A673 (cell line): ENCODE measurements at regions of chr5 and their contacts with region 1.

Region 1: GRCh38 chr5:149803641-149804468 is 73.7 kb downstream of the PPARGC1B start:
- DNase-seq: no peak
- H3K4me3 ChIP-seq: no peak overlapping the region
- H3K27ac ChIP-seq: no peak overlapping the region
- H3K4me1 ChIP-seq: peaks cover 24% of the 10 kb centered on the region
- H3K27me3 ChIP-seq: no peaks in the 10 kb centered on the region
- CTCF ChIP-seq: no peak

Region 2: DNA sequence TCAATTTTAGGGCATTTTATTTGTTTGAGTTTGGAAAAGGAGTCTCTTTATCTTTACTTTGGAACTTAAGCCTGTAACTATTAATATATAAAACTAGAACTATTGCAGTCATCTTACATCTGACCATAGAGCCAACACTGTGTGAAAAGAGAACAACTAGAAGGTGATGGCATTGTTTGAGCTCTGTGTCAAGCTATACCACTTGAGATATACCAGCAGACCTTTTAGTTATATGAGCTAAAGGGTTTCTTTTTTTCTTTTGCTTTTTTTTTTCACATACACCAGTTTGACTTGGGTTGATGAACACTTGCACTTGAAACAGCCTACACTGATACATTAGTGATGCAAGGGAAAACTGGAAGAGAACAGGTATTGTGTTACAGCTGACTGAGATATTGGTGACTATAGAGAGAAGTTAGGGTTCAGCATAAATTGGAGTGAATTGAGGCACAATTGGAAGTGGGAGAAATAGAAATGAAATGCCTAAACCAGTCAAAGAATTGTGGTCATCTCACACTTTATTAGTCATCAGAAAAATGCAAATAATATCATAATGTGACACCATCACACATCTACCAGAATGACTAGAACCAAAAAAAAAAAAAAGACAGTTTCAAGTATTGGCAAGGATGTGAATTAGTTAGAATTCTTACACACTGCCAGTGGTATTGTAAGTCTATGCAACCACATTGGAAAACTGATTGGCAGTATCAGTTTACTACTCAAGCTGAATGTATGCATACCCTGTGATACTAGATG is 916.6 kb before region 1 on chr5:
- CTCF ChIA-PET with region 1: no interaction called
- POLR2A ChIA-PET with region 1: no interaction called
- intact Hi-C with region 1: no loop called
- DNase-seq: no peak
- H3K4me3 ChIP-seq: no peak overlapping the region
- H3K27ac ChIP-seq: no peak overlapping the region
- H3K4me1 ChIP-seq: no peaks in the 10 kb centered on the region
- H3K27me3 ChIP-seq: no peaks in the 10 kb centered on the region
- CTCF ChIP-seq: no peak

Region 3: GRCh38 chr5:149887622-149888183 is 83.8 kb after region 1 on chr5:
- CTCF ChIA-PET with region 1: no interaction called
- POLR2A ChIA-PET with region 1: no interaction called
- intact Hi-C with region 1: no loop called
- DNase-seq: peak; percentile 45
- H3K4me3 ChIP-seq: no peak overlapping the region
- H3K27ac ChIP-seq: no peak overlapping the region
- H3K4me1 ChIP-seq: peaks cover 8% of the 10 kb centered on the region
- H3K27me3 ChIP-seq: no peaks in the 10 kb centered on the region
- CTCF ChIP-seq: no peak

Region 4: DNA sequence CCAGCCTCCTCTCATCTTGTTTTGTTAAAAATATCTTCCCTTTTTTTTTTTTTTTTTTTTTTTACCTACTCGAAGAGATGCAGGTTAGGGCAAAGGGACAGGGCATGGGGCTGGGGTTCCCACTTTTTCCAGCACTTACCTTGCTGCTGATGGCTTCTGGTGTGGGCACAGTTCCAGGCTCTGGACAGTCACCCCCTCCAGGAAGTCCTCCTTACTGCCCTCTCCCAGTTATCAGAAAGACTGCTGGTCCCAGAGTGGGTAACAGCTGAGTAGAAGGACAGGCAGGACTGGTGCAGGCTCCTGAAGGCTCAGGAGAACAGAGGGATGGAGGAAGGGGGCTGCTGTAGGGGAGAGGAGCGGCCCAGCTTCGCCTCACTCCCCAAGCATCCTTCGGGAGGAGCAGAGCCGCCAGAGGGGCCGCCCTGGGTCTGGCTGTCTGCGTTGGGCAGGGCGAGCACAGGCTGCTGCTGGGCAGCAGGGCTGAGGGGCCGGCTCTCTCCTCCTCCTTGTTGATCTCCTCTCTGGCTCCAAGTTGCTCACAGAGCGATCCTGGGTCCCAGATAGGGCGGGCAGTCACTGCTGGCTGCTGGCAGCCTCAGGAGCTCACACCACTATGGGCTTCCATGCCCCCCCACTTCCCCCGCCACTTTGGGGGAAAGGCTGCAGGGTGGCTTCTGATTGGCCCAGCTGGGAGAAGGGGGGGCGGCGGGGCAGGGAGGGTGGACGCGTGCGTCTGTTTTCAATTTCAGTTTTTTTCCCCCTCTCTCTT is 351.6 kb after region 1 on chr5 and contains the start of gene PDGFRB:
- CTCF ChIA-PET with region 1: no interaction called
- POLR2A ChIA-PET with region 1: interaction called, 11 read pairs
- intact Hi-C with region 1: no loop called
- DNase-seq: peak; percentile 90
- H3K4me3 ChIP-seq: peak within 1 kb of the TSS; percentile 47
- H3K27ac ChIP-seq: peak within 1 kb of the TSS; percentile 75
- H3K4me1 ChIP-seq: peaks cover 50% of the 10 kb centered on the region
- H3K27me3 ChIP-seq: no peaks in the 10 kb centered on the region
- CTCF ChIP-seq: no peak
- total RNA-seq, gene PDGFRB: 25.9 and 58.3 TPM in 2 replicates